Dorsolateral prefrontal cortex (tissue), 120 donors: ENCODE measurements at regions of chr3 and their contacts with region 1.

Region 1: GRCh38 chr3:40780291-40780924 is 255.6 kb downstream of the ZNF621 start:
- DNase-seq: peak; percentile 74 to 93 (median 87)
- H3K4me3 ChIP-seq: peak overlapping the region; percentile 8 to 70 (median 43)
- H3K27ac ChIP-seq: peak overlapping the region in 58 of 59 donors; percentile 0 to 88 (median 76)
- H3K27me3 ChIP-seq: no peaks in the 10 kb centered on the region
- CTCF ChIP-seq: peak in 30 of 56 donors; percentile 6 to 42 (median 22)

Region 2: DNA sequence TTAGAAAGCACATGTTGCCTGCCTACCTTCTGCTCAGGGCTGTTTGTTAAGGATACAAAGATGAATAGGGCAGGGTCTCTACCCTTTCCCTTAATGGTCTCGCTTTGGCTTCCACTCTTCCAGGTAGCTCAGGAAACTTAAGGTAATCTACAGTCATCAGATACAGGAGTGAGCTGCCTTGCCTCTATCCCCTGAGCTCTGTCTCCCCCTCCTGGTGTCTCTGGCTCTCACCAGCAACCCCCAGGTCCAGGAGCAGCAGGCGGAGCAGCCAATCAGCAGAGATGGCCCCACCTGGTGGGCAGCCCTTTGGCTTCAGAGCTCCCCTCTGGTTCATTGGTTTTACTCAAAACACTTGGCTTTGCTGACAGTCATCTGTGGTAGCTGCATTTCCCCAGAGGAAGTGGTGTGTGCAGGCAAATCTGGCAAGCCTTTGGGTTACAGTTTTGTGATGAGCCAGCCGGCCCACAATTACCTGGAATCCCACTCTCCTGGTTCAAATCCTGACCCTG is 1492.1 kb before region 1 on chr3:
- intact Hi-C with region 1: no loop called
- DNase-seq: peak; percentile 49 to 84 (median 78)
- H3K4me3 ChIP-seq: no peak overlapping the region
- H3K27ac ChIP-seq: no peak overlapping the region
- H3K27me3 ChIP-seq: no peaks in the 10 kb centered on the region
- CTCF ChIP-seq: peak in 55 of 56 donors; percentile 61 to 98 (median 89)

Region 3: GRCh38 chr3:40490916-40491315 is 289.5 kb before region 1 on chr3:
- intact Hi-C with region 1: no loop called
- DNase-seq: no peak
- H3K4me3 ChIP-seq: no peak overlapping the region
- H3K27ac ChIP-seq: peak overlapping the region in 3 of 59 donors; percentile 10 to 36 (median 23)
- H3K27me3 ChIP-seq: no peaks in the 10 kb centered on the region
- CTCF ChIP-seq: no peak

Region 4: DNA sequence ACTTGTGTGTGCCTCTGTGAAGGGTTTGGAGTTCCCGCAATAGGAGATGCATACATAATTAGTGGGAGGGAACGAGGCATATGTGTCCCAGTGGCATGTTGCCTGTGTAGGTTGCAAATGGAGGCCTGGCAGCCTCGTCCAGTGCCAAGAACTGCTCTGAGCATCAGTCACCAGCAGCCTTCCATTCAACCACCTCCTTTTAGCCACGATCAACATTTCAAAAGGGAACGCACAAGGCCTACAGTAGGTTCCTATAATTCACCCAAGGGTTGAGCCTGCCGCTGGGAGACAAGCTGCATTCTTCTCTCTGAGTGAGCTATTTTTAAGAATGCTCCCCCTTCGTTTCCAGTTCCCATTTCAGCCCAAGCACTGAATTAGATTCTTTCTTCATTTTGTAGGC is 340.1 kb after region 1 on chr3:
- intact Hi-C with region 1: loop called in 1 of 2 experiments (anchors 10 kb)
- DNase-seq: peak in 9 of 10 donors; percentile 16 to 68 (median 44)
- H3K4me3 ChIP-seq: peak overlapping the region in 1 of 59 donors; percentile 4
- H3K27ac ChIP-seq: peak overlapping the region in 48 of 59 donors; percentile 7 to 79 (median 56)
- H3K27me3 ChIP-seq: no peaks in the 10 kb centered on the region
- CTCF ChIP-seq: no peak

Region 5: GRCh38 chr3:41198950-41199865 is 418.8 kb after region 1 on chr3 and contains the start of gene CTNNB1:
- intact Hi-C with region 1: loop called in 1 of 2 experiments (anchors 5 kb)
- DNase-seq: peak; percentile 84 to 93 (median 90)
- H3K4me3 ChIP-seq: peak within 1 kb of the TSS; percentile 62 to 98 (median 85)
- H3K27ac ChIP-seq: peak within 1 kb of the TSS; percentile 60 to 99 (median 93)
- H3K27me3 ChIP-seq: no peaks in the 10 kb centered on the region
- CTCF ChIP-seq: peak in 45 of 56 donors; percentile 7 to 63 (median 37)
- total RNA-seq, gene CTNNB1: 196 to 326 (median 252) TPM